ENCODE measurements at regions of chr11 and their contacts with region 1.

Region 1: DNA sequence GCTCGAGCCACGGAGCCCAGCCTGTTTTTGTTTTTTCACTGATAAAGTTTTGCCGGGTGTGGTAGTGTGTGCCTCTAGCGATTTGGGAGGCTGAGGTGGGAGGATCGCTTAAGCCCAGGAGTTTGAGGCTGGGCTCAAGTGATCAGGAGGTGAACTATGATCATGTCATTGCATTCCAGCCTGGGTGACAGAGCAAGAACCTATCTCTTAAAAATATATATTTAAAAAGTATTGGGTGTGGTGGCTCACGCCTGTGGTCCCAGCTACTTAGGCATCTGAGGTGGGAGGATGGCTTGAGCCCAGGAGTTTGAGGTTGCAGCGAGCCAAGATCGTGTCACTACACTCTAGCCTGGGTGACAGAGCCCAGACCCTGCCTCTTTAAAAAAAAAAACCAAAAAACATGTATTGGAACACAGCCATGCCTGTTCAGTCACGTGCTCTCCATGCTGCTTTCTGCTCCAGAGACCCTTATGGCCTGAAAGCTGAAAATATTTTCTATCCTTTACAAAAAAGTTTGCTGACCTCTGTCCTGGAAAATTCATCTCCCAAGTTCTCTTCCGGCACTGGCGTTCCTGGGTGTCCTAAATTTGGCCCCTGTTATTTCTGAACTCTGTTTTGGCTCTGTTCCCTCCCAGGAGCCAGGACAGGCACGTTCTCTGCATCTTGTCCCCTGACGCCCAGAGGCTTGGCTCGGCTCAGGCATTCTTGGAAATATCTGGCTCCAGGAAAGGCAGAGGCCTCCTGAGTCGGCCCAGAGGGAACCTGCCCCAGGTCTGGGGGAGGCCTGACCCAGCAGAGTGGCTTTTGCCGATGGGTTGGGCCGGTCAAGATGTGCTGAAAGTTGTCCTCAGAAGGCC is 61.3 kb upstream of the PPP6R3 start:
- DNase-seq: no peak
- ATAC-seq: no peak
- H3K4me3 ChIP-seq: no peak overlapping the region
- H3K27ac ChIP-seq: no peak overlapping the region
- H3K4me1 ChIP-seq: no peaks in the 10 kb centered on the region
- H3K27me3 ChIP-seq: no peaks in the 10 kb centered on the region
- CTCF ChIP-seq: no peak

Region 2: DNA sequence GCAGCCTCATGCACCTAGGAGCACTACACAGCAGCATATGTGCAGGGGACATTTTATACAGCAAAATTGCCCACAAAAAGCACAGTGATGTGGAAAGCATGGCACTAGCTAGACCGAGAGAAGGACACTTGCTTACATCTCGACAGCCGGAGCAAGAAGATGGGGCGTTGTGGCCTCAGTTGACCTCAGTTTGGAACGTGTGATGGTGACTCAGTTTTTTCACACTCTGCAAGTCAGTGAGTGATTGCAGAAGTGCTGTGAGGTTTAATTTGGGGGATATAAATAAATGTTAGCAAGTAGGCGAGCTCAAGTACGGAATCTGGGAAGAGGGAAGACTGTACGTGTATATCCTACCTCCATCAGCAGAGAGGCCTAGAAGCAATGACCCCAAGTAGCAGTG is 63.5 kb before region 1 on chr11:
- CTCF ChIA-PET with region 1: interaction called, 11 read pairs
- POLR2A ChIA-PET with region 1: no interaction called
- intact Hi-C with region 1: no loop called
- DNase-seq: no peak
- ATAC-seq: no peak
- H3K4me3 ChIP-seq: no peak overlapping the region
- H3K27ac ChIP-seq: no peak overlapping the region
- H3K4me1 ChIP-seq: peaks cover 6% of the 10 kb centered on the region
- H3K27me3 ChIP-seq: no peaks in the 10 kb centered on the region
- CTCF ChIP-seq: no peak

Measured in PC-3 (cell line).